Activated CD8-positive, alpha-beta T cell treated with anti-CD3 and anti-CD28 coated beads for 36 hours (primary cell): ENCODE measurements at regions of chr2 and their contacts with region 1.

Region 1: DNA sequence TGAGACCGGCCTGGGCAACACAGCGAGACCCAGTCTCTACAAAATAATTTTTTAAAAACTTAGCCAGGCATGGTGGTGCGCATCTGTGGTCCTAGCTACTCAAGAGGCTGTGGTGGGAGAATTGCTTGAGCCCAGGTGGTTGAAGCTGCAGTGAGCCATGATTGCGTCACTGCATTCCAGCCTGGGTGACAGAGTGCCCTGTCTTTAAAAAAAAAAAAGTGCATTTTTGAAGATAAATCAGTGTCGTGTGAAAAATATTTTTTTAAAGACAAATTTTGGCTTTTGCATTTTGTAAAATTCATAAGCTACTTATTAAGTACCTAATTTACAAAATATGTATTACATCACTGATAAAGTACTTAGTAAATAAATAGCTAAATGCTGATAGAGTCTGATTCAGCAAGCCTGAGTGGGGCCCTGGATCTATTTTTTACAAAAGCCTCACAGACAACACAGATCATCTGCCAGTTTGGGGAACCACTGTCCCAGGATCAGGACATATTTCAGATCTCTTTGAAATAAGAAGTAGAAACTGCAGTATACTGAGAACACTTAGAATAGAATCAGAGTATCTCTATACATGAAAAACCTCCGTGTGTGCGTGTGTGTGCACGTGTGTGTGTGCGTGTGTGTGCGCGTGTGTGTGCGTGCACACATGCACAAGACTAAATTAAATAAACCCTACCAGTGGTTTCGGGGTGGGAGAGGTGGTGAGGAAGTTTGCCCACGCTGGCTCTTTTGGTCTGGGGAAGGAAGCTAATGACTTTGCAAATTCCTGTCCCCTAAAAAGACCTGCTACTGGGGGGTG is 61.6 kb downstream of the AAK1 start:
- DNase-seq: peak; percentile 55
- ATAC-seq: peak; percentile 24
- H3K4me3 Mint-ChIP-seq: peak overlapping the region; percentile 66
- H3K27ac Mint-ChIP-seq: peak overlapping the region; percentile 88
- H3K4me1 Mint-ChIP-seq: peaks cover 89% of the 10 kb centered on the region
- H3K27me3 Mint-ChIP-seq: no peaks in the 10 kb centered on the region
- CTCF ChIP-seq: no peak

Region 2: GRCh38 chr2:69368588-69368987 is 213.4 kb before region 1 on chr2:
- CTCF ChIA-PET with region 1: no interaction called
- POLR2A ChIA-PET with region 1: no interaction called
- intact Hi-C with region 1: no loop called
- DNase-seq: no peak
- ATAC-seq: no peak
- H3K4me3 Mint-ChIP-seq: no peak overlapping the region
- H3K27ac Mint-ChIP-seq: no peak overlapping the region
- H3K4me1 Mint-ChIP-seq: no peaks in the 10 kb centered on the region
- H3K27me3 Mint-ChIP-seq: no peaks in the 10 kb centered on the region
- CTCF ChIP-seq: no peak

Region 3: DNA sequence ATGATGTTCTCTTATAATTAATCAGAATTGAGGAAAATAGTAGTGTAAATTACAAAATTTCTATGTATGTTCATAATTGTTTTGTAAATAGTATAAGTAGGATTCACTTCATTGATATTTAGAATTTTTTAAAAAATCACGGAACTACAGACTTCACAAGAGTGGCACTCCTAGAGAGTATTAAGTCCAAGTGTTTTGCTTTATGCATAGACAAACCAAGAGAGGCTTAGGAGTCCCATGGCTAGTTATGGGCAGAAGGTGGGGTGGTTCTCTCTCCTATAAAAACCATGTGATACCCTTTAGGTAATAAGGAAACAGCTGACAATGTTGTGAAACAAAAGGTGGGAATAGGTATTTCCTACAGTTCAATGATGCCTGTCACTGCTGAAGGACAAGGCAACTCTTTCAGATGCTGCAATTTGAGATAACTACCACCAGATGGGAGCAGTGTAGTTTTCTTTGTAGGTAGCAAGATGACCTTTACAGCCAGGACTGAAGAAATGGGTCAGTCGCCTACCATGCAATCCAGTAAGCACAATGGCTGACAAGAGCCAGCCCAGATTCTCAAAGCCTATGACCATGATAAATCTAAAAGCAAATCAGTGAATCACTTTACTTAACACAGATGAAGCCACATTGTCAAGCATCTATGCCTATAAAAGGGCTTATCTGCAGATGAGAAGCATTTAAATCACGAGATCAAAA is 22.4 kb before region 1 on chr2:
- CTCF ChIA-PET with region 1: interaction called, 187 read pairs
- POLR2A ChIA-PET with region 1: interaction called, 8 read pairs
- intact Hi-C with region 1: loop called (anchors 2 kb)
- DNase-seq: peak; percentile 33
- ATAC-seq: peak; percentile 84
- H3K4me3 Mint-ChIP-seq: no peak overlapping the region
- H3K27ac Mint-ChIP-seq: peak overlapping the region; percentile 67
- H3K4me1 Mint-ChIP-seq: peaks cover 75% of the 10 kb centered on the region
- H3K27me3 Mint-ChIP-seq: no peaks in the 10 kb centered on the region
- CTCF ChIP-seq: peak; percentile 72

Region 4: DNA sequence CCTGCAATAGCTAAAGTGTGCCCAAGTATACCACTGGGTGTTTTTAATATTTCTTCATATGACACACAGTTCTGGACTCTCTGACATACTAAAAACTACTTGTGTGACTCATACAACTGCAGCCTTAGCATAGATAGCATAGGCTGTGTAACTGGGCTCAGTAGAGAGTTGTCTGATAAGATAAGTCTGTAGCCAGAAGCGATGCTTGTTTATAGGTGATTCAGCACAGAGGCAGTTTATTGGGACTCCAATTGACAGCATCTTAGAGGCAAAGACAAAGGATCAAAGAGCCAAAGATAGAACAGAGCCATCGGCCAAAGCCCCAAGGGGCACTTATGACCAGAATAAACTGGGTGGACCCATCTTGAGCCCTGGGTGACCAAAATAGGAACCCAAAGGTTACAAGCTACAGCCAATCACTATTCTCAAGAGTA is 19.2 kb after region 1 on chr2:
- CTCF ChIA-PET with region 1: interaction called, 4 read pairs
- POLR2A ChIA-PET with region 1: interaction called, 13 read pairs
- intact Hi-C with region 1: no loop called
- DNase-seq: no peak
- ATAC-seq: peak; percentile 86
- H3K4me3 Mint-ChIP-seq: no peak overlapping the region
- H3K27ac Mint-ChIP-seq: peak overlapping the region; percentile 82
- H3K4me1 Mint-ChIP-seq: peaks cover 90% of the 10 kb centered on the region
- H3K27me3 Mint-ChIP-seq: no peaks in the 10 kb centered on the region
- CTCF ChIP-seq: no peak

Region 5: GRCh38 chr2:69659941-69660483 is 78.0 kb after region 1 on chr2:
- CTCF ChIA-PET with region 1: no interaction called
- POLR2A ChIA-PET with region 1: no interaction called
- intact Hi-C with region 1: no loop called
- DNase-seq: no peak
- ATAC-seq: no peak
- H3K4me3 Mint-ChIP-seq: no peak overlapping the region
- H3K27ac Mint-ChIP-seq: no peak overlapping the region
- H3K4me1 Mint-ChIP-seq: peaks cover 12% of the 10 kb centered on the region
- H3K27me3 Mint-ChIP-seq: no peaks in the 10 kb centered on the region
- CTCF ChIP-seq: no peak

Region 6: DNA sequence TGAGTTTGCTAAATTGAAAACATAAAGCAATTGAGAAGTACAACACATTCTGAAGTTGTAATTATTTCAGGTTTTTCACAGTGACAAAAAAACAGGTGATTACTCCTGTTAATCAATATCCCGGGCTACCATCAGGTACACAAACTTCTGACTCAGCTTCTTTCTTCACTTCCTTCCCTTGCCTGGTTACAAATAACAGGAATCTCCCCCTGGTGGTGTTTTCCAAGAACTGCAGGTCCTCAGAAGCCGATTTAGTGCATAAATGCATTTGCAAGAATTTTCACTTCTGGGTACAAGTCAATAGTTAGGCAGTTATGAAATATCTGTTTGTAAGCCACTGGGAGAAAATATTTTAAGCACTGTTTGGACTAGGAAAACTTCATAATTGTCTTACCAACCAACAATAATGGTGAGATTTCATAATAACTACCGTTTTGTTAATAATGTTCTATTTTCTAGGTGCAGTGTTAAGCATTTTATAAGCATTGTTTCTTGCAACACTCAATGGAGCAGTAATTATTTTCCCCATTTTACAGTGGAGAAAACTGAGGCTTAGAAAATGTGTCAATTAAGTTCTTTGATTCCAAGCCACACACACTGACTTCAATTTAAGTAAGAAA is 235.1 kb after region 1 on chr2:
- CTCF ChIA-PET with region 1: no interaction called
- POLR2A ChIA-PET with region 1: no interaction called
- intact Hi-C with region 1: no loop called
- DNase-seq: peak; percentile 88
- ATAC-seq: peak; percentile 89
- H3K4me3 Mint-ChIP-seq: no peak overlapping the region
- H3K27ac Mint-ChIP-seq: no peak overlapping the region
- H3K4me1 Mint-ChIP-seq: peaks cover 4% of the 10 kb centered on the region
- H3K27me3 Mint-ChIP-seq: no peaks in the 10 kb centered on the region
- CTCF ChIP-seq: peak; percentile 94